GM12878 (cell line): ENCODE measurements at regions of chr6 and their contacts with region 1.

Region 1: GRCh38 chr6:158231551-158232315 is 63.6 kb downstream of the GTF2H5 start:
- DNase-seq: no peak
- ATAC-seq: peak; percentile 58
- H3K4me3 ChIP-seq: peak overlapping the region; percentile 84
- H3K27ac ChIP-seq: peak overlapping the region; percentile 68
- H3K4me1 ChIP-seq: peaks cover 11% of the 10 kb centered on the region
- H3K27me3 ChIP-seq: no peaks in the 10 kb centered on the region
- CTCF ChIP-seq: no peak
- EP300 ChIP-seq: no peak
- POLR2A ChIP-seq: peak; percentile 70
- RAD21 ChIP-seq: no peak

Region 2: DNA sequence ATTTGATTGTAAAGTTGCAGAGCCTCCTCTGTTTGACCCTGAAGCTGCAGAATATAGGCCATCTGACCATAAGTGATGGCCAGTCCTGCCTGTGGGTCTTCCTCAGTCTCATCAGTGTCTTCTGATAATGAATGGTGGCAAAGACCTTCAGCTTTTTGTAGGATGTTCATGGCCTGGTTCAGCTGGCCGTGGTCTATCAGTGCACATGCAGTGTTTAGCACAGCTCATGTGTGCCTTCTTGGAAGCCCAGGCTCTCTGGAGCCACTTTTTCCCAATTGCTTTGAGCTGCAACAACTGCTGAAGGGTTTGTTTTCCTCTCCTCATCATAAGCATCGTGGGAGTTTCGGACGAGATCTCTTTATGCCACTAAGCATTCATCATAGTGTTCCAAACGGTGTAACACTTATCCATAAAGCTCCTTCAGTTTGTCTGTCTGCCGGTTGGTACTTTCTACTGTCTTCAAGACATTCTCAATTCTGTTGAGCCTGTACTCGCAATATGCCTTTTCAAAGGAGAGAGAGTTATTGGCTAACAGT is 10.4 kb after region 1 on chr6:
- CTCF ChIA-PET with region 1: interaction called, 15 read pairs
- POLR2A ChIA-PET with region 1: interaction called, 11 read pairs
- RAD21 ChIA-PET with region 1: interaction called, 4 read pairs
- SMC1A ChIA-PET with region 1: interaction called, 14 read pairs
- in situ Hi-C with region 1: no loop called
- intact Hi-C with region 1: no loop called
- DNase-seq: no peak
- ATAC-seq: peak; percentile 26
- H3K4me3 ChIP-seq: no peak overlapping the region
- H3K27ac ChIP-seq: peak overlapping the region; percentile 63
- H3K4me1 ChIP-seq: peaks cover 25% of the 10 kb centered on the region
- H3K27me3 ChIP-seq: no peaks in the 10 kb centered on the region
- CTCF ChIP-seq: no peak
- EP300 ChIP-seq: 0 out of 4 replicates have a peak, but pooled peaks of 1 of the 2 experiments have one; percentile 18
- POLR2A ChIP-seq: no peak
- RAD21 ChIP-seq: no peak

Region 3: DNA sequence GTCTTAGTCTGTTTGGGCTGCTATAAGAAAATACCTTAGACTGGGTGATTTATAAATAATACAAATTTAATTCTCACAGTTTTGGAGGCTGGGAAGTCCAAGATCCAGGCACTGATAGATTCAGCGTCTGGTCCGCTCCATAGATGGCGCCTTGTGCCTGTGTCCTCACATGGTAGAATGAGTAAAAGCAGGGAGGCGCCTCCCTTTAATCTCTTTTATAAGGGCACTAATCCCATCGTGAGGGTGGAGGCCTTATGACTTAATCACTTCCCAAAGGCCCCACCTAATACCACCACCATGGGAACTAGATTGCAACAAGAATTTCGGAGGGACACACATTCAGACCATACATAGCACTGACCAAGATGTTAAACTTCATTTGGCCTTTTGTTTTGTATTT is 236.9 kb after region 1 on chr6:
- CTCF ChIA-PET with region 1: no interaction called
- POLR2A ChIA-PET with region 1: no interaction called
- RAD21 ChIA-PET with region 1: no interaction called
- SMC1A ChIA-PET with region 1: no interaction called
- in situ Hi-C with region 1: no loop called
- intact Hi-C with region 1: no loop called
- DNase-seq: no peak
- ATAC-seq: no peak
- H3K4me3 ChIP-seq: no peak overlapping the region
- H3K27ac ChIP-seq: no peak overlapping the region
- H3K4me1 ChIP-seq: peaks cover 3% of the 10 kb centered on the region
- H3K27me3 ChIP-seq: no peaks in the 10 kb centered on the region
- CTCF ChIP-seq: peak in 1 of 3 experiments; percentile 26; a peak in 1 of 6 replicates
- EP300 ChIP-seq: no peak
- POLR2A ChIP-seq: no peak
- RAD21 ChIP-seq: no peak

Region 4: GRCh38 chr6:158595223-158595622 is 363.5 kb after region 1 on chr6:
- CTCF ChIA-PET with region 1: no interaction called
- POLR2A ChIA-PET with region 1: no interaction called
- RAD21 ChIA-PET with region 1: no interaction called
- SMC1A ChIA-PET with region 1: no interaction called
- in situ Hi-C with region 1: loop called (anchors 5 kb)
- intact Hi-C with region 1: no loop called
- DNase-seq: no peak
- ATAC-seq: peak; percentile 58; the same call in 2 of the 3 replicates
- H3K4me3 ChIP-seq: no peak overlapping the region
- H3K27ac ChIP-seq: no peak overlapping the region
- H3K4me1 ChIP-seq: no peaks in the 10 kb centered on the region
- H3K27me3 ChIP-seq: no peaks in the 10 kb centered on the region
- CTCF ChIP-seq: peak; percentile 19 to 30 (median 25); a peak in 4 of 6 replicates
- EP300 ChIP-seq: no peak
- POLR2A ChIP-seq: no peak
- RAD21 ChIP-seq: peak; percentile 16; the same call in 1 of the 2 replicates